ENCODE measurements at regions of chr7 and their contacts with region 1.

Region 1: DNA sequence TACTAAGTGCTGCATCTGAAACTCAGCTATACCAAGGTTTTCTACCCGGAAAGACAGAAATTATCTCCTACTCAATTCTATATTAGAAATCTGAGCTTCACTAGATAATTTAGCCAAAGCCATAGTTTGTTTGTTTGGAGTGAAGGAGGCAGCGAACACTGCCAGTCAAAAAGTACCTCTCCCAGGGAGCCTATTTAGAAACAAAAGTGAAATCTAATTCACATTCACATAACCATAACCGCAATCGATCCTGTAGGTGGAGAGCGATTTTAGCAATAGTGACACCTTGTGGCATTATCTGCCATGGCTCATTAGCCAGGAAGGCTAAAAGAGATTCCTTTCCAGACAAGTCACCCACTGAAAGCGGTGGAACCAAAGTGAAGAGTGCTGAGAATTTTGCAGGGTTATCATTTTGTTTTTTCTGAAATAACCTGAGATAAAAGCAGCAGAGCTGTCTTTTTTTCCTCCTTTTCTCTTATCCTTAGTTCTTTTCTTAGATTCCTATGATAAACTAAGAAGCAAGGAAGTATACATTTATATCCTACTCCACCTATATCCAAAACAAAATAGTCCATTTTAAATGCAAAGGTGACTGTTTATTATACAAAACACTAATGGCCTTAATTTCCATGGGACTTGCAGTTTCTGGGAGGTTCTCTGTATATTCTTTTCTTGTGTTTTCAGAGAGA is 83.7 kb upstream of the BET1 start:
- DNase-seq: peak; percentile 52
- H3K4me3 Mint-ChIP-seq: peak overlapping the region; percentile 24
- H3K27ac Mint-ChIP-seq: peak overlapping the region; percentile 28
- H3K4me1 Mint-ChIP-seq: peaks cover 14% of the 10 kb centered on the region
- H3K27me3 Mint-ChIP-seq: no peaks in the 10 kb centered on the region
- CTCF ChIP-seq: peak; percentile 46

Region 2: GRCh38 chr7:93715234-93715633 is 372.6 kb before region 1 on chr7:
- CTCF ChIA-PET with region 1: no interaction called
- intact Hi-C with region 1: loop called (anchors 1 kb)
- DNase-seq: peak; percentile 65
- H3K4me3 Mint-ChIP-seq: no peak overlapping the region
- H3K27ac Mint-ChIP-seq: no peak overlapping the region
- H3K4me1 Mint-ChIP-seq: peaks cover 27% of the 10 kb centered on the region
- H3K27me3 Mint-ChIP-seq: no peaks in the 10 kb centered on the region
- CTCF ChIP-seq: peak; percentile 47

Region 3: DNA sequence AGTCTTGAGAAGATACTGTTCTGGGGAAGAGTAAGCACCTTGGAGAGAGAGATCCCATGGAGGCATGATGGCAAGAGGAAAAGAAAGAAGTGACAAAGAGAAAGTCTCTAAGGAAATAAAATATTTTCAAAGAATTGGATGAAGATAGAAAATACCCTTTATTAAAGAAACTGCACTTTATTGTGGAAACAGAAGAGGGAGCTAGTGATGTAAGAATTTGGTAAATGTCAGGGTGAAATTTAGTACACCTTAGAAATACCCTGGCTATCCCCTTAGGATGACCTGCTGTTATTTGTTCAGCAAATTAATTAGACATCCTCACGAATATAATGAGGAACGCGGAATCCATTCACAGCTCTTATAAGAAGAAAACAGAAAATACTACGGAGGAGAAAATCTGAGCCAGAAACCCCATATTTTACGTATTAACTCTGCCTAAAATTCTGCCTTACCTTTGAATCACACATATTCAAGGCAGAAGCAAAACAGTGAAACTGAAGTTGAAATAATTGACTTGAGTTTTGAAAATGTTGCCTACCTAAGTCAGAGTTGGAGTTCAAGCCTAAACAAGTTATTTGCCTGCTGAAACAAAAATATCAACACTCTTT is 288.0 kb before region 1 on chr7:
- CTCF ChIA-PET with region 1: no interaction called
- intact Hi-C with region 1: loop called (anchors 5 kb)
- DNase-seq: no peak
- H3K4me3 Mint-ChIP-seq: no peak overlapping the region
- H3K27ac Mint-ChIP-seq: peak overlapping the region; percentile 16
- H3K4me1 Mint-ChIP-seq: peaks cover 10% of the 10 kb centered on the region
- H3K27me3 Mint-ChIP-seq: no peaks in the 10 kb centered on the region
- CTCF ChIP-seq: no peak

Region 4: DNA sequence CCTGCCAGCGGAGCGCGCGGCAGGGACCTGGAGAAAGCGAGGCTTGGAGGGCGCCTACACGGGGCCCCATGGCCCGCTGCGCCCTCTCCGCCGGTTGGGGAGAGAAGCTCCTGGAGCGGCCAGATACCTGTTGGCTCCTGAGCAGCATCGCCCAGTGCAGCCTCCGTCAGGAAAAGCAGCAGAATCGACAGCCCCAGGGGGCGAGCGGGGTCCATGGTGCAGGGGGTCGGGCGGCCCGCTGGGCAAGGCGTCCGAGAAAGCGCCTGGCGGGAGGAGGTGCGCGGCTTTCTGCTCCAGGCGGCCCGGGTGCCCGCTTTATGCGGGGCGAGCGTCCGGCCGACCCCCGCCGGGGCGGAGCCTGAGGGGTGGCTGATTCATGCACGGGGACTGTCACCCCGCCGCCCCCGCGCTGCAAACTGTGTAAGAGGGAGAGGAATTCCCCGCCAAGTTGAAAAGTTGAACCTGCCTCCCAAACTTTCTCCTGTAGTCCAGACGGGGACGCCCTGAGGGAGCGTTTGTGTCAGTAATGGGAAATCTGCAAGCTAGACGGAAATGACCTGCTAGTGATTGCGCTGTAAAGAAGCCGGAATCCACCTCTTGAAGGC is 197.2 kb before region 1 on chr7 and contains the start of gene TFPI2:
- CTCF ChIA-PET with region 1: no interaction called
- intact Hi-C with region 1: loop called (anchors 5 kb)
- DNase-seq: peak; percentile 82
- H3K4me3 Mint-ChIP-seq: peak within 1 kb of the TSS; percentile 83
- H3K27ac Mint-ChIP-seq: peak within 1 kb of the TSS; percentile 66
- H3K4me1 Mint-ChIP-seq: peaks cover 42% of the 10 kb centered on the region
- H3K27me3 Mint-ChIP-seq: no peaks in the 10 kb centered on the region
- CTCF ChIP-seq: no peak
- total RNA-seq, gene TFPI2: 213 and 218 TPM in 2 replicates

Region 5: DNA sequence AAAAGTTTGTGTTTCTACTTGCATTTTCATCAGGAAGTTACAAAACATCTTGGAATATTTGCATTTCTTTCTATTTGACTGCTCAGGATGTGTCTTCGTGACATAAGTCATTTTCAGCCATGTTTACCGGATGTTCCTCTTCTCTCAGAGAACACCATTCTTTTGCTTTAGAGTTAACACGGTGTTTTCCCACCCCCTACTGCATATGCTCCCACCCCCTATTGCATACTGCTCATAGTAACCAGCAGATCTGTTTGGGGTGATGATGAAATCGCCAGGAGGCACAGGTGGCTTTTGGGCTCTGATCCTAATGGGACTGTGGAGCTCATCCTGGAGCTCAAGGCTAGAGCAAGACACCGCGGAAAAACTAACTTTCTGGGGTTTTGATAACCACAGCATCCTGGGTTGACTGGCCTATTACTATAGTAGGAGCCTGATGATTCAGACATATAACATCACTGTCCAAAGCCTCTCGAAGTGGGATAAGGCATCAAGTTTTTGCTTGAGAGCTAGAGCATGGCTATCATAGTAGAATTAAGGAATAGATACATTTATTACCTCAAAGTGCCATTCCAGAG is 18.6 kb before region 1 on chr7:
- CTCF ChIA-PET with region 1: no interaction called
- intact Hi-C with region 1: no loop called
- DNase-seq: no peak
- H3K4me3 Mint-ChIP-seq: no peak overlapping the region
- H3K27ac Mint-ChIP-seq: no peak overlapping the region
- H3K4me1 Mint-ChIP-seq: peaks cover 9% of the 10 kb centered on the region
- H3K27me3 Mint-ChIP-seq: no peaks in the 10 kb centered on the region
- CTCF ChIP-seq: no peak

Region 6: DNA sequence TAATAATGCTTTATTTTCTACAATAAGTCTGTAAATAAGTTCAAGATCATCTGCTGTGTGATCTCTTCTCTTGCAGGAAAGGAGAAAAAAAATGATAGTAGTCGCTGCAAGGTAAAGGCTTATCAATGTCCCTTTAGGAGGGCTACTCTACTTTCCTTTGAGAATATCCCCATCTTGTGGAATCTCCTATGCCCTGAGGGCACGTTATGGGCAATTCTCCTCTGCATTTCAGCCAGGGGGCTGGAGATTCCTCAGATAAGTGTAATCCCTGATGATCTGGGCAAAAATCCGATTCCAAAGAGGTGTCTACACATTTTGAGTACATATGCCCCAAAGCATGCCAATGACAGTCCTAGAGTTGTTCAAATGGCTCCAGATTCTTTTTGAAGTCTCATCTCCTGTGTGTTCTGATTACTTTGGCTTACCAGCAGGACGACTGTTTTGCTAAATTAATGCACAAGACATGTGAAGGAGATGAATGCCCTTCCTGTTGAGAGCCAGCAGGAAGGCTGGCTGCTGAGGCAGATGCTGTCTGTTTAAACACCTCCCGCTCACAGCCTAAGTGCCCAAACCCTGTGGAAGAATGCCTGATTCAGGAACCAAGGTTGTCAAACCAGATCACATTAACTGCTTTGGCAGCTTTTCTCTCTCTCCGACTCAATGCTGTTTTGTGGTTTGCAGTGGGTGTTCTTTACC is 135.7 kb after region 1 on chr7:
- CTCF ChIA-PET with region 1: no interaction called
- intact Hi-C with region 1: loop called (anchors 2 kb)
- DNase-seq: peak; percentile 38
- H3K4me3 Mint-ChIP-seq: peak overlapping the region; percentile 51
- H3K27ac Mint-ChIP-seq: no peak overlapping the region
- H3K4me1 Mint-ChIP-seq: no peaks in the 10 kb centered on the region
- H3K27me3 Mint-ChIP-seq: no peaks in the 10 kb centered on the region
- CTCF ChIP-seq: no peak

Region 7: GRCh38 chr7:94276795-94277194 is 189.0 kb after region 1 on chr7:
- CTCF ChIA-PET with region 1: no interaction called
- intact Hi-C with region 1: loop called (anchors 5 kb)
- DNase-seq: peak; percentile 5
- H3K4me3 Mint-ChIP-seq: no peak overlapping the region
- H3K27ac Mint-ChIP-seq: no peak overlapping the region
- H3K4me1 Mint-ChIP-seq: no peaks in the 10 kb centered on the region
- H3K27me3 Mint-ChIP-seq: no peaks in the 10 kb centered on the region
- CTCF ChIP-seq: no peak